HepG2 (cell line): ENCODE measurements at regions of chr2 and their contacts with region 1.

Region 1: DNA sequence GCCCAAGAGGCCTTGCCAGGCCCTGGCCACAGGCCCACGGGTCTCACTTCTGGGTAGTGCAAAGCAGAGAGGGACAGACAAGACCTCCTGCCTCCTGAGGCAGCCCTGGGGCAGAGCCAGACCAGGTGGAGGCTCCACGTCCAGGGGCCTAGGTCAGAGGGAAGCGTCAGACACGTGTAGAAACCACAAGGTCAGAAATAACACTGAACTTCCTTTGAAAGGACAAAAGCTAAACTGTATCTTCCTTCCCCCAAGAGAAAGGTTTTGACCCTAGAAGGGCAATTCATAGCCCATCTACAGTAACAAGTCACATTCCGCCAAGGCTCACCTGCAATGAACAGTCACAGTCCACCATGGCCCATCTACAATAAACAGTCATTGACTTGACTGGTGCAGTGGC is 17.9 kb downstream of the SDC1 start:
- DNase-seq: no peak
- ATAC-seq: peak; percentile 1; the same call in 2 of the 3 replicates
- H3K4me3 ChIP-seq: no peak overlapping the region
- H3K27ac ChIP-seq: peak overlapping the region; percentile 70
- H3K4me1 ChIP-seq: peaks cover 73% of the 10 kb centered on the region
- H3K27me3 ChIP-seq: no peaks in the 10 kb centered on the region
- CTCF ChIP-seq: no peak
- EP300 ChIP-seq: peak in 1 of 2 experiments; percentile 20; a peak in 1 of 4 replicates
- POLR2A ChIP-seq: no peak
- RAD21 ChIP-seq: no peak

Region 2: DNA sequence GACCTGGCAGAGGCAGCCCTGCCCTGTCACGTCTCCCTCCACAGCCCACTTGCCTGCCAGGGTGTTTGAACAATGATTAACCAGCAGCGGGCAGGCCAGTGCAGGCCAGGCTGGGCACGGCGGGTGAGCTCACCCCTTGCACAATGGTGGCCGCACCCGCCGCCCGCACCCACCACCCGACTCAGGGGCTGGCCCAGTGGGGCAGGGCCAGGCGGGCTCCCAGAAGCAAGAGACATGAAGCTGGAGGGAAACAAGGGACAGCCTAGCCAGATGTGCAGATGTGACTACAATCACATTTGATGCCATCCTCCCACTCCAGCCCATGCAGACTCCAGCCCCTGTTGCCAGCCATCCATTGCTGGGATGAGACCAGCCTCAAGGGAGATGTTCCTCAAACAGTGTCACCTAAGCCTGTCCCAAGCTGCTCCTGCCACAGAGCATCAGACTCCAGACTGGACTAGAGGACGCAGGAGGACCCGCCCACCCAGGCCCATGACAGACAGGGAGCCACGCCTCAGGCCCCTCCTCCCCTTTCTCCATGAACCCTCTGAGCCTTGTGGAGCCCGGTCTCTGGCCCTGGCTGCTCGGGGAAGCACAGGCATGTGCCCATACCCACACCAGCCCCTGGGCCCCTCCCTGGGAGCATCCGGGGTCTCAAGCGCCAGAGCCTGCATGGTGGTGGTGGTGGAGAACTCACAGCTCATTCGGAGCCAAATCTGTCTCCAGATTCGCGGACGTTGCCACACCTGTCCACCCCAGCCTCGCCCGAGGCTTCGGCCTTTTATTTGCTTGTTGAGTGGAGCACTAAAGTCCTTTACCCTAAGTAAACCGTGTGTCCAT is 27.1 kb before region 1 on chr2:
- CTCF ChIA-PET with region 1: no interaction called
- POLR2A ChIA-PET with region 1: interaction called, 38 read pairs
- in situ Hi-C with region 1: no loop called
- intact Hi-C with region 1: no loop called
- DNase-seq: peak; percentile 88
- ATAC-seq: peak; percentile 84
- H3K4me3 ChIP-seq: peak overlapping the region; percentile 47 to 73 (median 53)
- H3K27ac ChIP-seq: peak overlapping the region; percentile 60
- H3K4me1 ChIP-seq: peaks cover 76% of the 10 kb centered on the region
- H3K27me3 ChIP-seq: no peaks in the 10 kb centered on the region
- CTCF ChIP-seq: peak; percentile 63
- EP300 ChIP-seq: peak; percentile 14 to 25; a peak in 1 of 4 replicates
- POLR2A ChIP-seq: peak in 1 of 2 experiments; percentile 35; a peak in 2 of 4 replicates
- RAD21 ChIP-seq: peak; percentile 64; the same call in 1 of the 2 replicates

Region 3: GRCh38 chr2:20755132-20755800 is 548.2 kb after region 1 on chr2:
- CTCF ChIA-PET with region 1: no interaction called
- POLR2A ChIA-PET with region 1: no interaction called
- in situ Hi-C with region 1: no loop called
- intact Hi-C with region 1: no loop called
- DNase-seq: no peak
- ATAC-seq: peak; percentile 36; the same call in 2 of the 3 replicates
- H3K4me3 ChIP-seq: no peak overlapping the region
- H3K27ac ChIP-seq: no peak overlapping the region
- H3K4me1 ChIP-seq: peaks cover 11% of the 10 kb centered on the region
- H3K27me3 ChIP-seq: no peaks in the 10 kb centered on the region
- CTCF ChIP-seq: peak; percentile 26; the same call in 1 of the 2 replicates
- EP300 ChIP-seq: no peak
- POLR2A ChIP-seq: no peak
- RAD21 ChIP-seq: no peak